ENCODE measurements at regions of chr21 and their contacts with region 1.

Region 1: GRCh38 chr21:34574601-34575529 is 40.0 kb downstream of the RCAN1 start:
- DNase-seq: no peak
- H3K4me3 ChIP-seq: no peak overlapping the region
- H3K27ac ChIP-seq: peak overlapping the region; percentile 46 to 72
- H3K4me1 ChIP-seq: peaks cover 0 to 16% of the 10 kb centered on the region in 2 donors
- H3K27me3 ChIP-seq: no peaks in the 10 kb centered on the region
- CTCF ChIP-seq: no peak

Region 2: GRCh38 chr21:34536820-34537219 is 38.0 kb before region 1 on chr21:
- intact Hi-C with region 1: no loop called
- DNase-seq: no peak
- H3K4me3 ChIP-seq: no peak overlapping the region
- H3K27ac ChIP-seq: no peak overlapping the region
- H3K4me1 ChIP-seq: peaks cover 0 to 13% of the 10 kb centered on the region in 2 donors
- H3K27me3 ChIP-seq: no peaks in the 10 kb centered on the region
- CTCF ChIP-seq: no peak

Region 3: GRCh38 chr21:34553151-34553952 is 21.5 kb before region 1 on chr21:
- intact Hi-C with region 1: loop called (anchors 1 kb)
- DNase-seq: no peak
- H3K4me3 ChIP-seq: peak overlapping the region in 1 of 2 donors; percentile 14
- H3K27ac ChIP-seq: peak overlapping the region; percentile 29 to 58
- H3K4me1 ChIP-seq: peaks cover 0 to 14% of the 10 kb centered on the region in 2 donors
- H3K27me3 ChIP-seq: no peaks in the 10 kb centered on the region
- CTCF ChIP-seq: no peak